ENCODE measurements at regions of chr19 and their contacts with region 1.

Region 1: DNA sequence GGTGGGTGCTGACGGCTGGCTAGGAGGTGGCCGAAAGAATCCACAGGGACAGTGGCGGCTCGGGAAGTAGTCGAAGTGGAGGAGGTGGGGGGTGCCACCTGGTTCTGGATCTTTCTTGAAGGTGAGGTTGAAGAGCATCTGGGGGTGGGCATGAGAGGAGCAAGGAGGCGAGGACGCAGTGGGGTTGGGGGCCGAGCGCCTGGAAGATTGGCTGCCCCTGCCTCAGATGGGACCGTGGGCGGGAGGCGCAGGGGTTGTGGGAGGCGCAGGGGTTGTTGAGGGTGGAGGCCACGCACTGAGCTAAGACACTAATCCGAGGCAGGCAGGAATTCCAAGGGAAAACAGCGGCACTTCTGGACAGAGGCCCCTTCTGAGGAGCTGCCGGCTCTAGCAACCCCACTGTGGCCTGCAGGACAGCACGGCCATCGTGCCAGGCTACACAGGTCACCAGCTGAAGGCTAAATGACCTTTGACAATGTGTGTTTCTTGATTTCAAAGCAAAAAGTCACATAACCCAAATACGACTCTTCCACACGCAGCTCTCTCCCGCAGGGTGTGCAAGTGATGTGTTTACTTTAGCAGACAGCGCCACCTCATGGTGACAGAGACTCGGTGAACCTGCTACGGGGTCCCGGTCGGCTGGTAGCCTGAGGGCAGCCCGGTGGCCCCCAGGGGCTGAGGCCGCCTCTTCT is 44.1 kb upstream of the RANBP3 start:
- DNase-seq: peak; percentile 52 to 85 (median 81)
- ATAC-seq: peak; percentile 94
- H3K4me3 ChIP-seq: no peak overlapping the region
- H3K4me3 Mint-ChIP-seq: no peak overlapping the region
- H3K27ac ChIP-seq: no peak overlapping the region
- H3K27ac Mint-ChIP-seq: no peak overlapping the region
- H3K4me1 ChIP-seq: no peaks in the 10 kb centered on the region
- H3K4me1 Mint-ChIP-seq: peaks cover 3% of the 10 kb centered on the region
- H3K27me3 ChIP-seq: no peaks in the 10 kb centered on the region
- H3K27me3 Mint-ChIP-seq: peaks cover 4% of the 10 kb centered on the region
- CTCF ChIP-seq: peak; percentile 84

Region 2: DNA sequence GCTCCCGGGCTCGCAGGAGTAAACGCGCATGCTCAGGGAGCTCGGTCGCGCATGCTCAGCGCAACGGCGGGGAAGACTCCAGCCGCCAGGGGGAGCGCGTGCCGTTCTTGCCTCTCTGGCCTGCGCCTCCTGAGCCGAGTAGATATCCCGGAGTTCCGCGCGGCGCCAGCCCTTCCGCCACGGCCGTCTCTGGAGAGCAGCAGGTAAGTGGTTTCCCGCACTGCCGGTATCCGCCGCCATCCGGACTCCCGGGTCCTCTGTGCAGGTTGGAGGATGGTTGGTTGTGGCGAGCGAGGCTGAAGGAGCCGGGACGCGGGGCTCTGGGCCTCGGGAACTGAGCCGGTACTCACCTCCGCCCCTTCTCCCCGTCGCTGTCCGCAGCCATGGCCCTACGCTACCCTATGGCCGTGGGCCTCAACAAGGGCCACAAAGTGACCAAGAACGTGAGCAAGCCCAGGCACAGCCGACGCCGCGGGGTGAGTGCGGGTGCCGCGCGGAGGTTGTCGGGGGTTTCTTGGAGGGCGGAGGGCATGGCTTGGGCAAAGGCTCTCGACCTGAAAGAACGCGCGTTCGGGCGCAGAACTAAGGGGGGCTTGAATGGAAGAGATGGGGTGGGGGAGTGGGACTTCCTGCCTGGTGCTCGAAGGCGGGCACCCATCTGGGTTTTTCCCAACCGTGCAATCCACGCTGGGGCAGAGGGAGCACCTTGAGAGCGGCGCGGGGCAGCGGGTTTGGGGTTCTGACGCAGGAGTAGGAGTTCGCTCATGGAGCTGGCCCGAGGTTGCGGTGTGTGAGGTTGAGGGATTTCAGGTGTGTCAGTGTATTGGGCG is 331.7 kb before region 1 on chr19 and contains the start of gene RPL36:
- CTCF ChIA-PET with region 1: no interaction called
- POLR2A ChIA-PET with region 1: no interaction called
- intact Hi-C with region 1: loop called in 1 of 2 experiments (anchors 1 kb)
- DNase-seq: peak; percentile 95 to 100 (median 99)
- ATAC-seq: peak; percentile 63
- H3K4me3 ChIP-seq: peak within 1 kb of the TSS; percentile 84 to 96
- H3K4me3 Mint-ChIP-seq: peak within 1 kb of the TSS; percentile 91
- H3K27ac ChIP-seq: peak within 1 kb of the TSS; percentile 86 to 89
- H3K27ac Mint-ChIP-seq: peak within 1 kb of the TSS; percentile 93
- H3K4me1 ChIP-seq: peaks cover 26% of the 10 kb centered on the region
- H3K4me1 Mint-ChIP-seq: peaks cover 48% of the 10 kb centered on the region
- H3K27me3 ChIP-seq: no peaks in the 10 kb centered on the region
- H3K27me3 Mint-ChIP-seq: no peaks in the 10 kb centered on the region
- CTCF ChIP-seq: peak; percentile 96
- total RNA-seq, gene RPL36: 1,425 to 1,465 TPM

Region 3: GRCh38 chr19:5803752-5804515 is 218.1 kb before region 1 on chr19:
- CTCF ChIA-PET with region 1: interaction called, 36 read pairs
- POLR2A ChIA-PET with region 1: interaction called, 4 read pairs
- intact Hi-C with region 1: loop called in 1 of 2 experiments (anchors 1 kb)
- DNase-seq: peak; percentile 80 to 96 (median 92)
- ATAC-seq: peak; percentile 97
- H3K4me3 ChIP-seq: peak overlapping the region; percentile 41 to 61
- H3K4me3 Mint-ChIP-seq: peak overlapping the region; percentile 75
- H3K27ac ChIP-seq: no peak overlapping the region
- H3K27ac Mint-ChIP-seq: no peak overlapping the region
- H3K4me1 ChIP-seq: peaks cover 34% of the 10 kb centered on the region
- H3K4me1 Mint-ChIP-seq: peaks cover 23% of the 10 kb centered on the region
- H3K27me3 ChIP-seq: peaks cover 0 to 35% of the 10 kb centered on the region in 2 experiments
- H3K27me3 Mint-ChIP-seq: peaks cover 18% of the 10 kb centered on the region
- CTCF ChIP-seq: peak; percentile 93

Region 4: GRCh38 chr19:5927441-5927821 is 94.6 kb before region 1 on chr19:
- CTCF ChIA-PET with region 1: interaction called, 11 read pairs
- POLR2A ChIA-PET with region 1: no interaction called
- intact Hi-C with region 1: no loop called
- DNase-seq: no peak
- ATAC-seq: no peak
- H3K4me3 ChIP-seq: no peak overlapping the region
- H3K4me3 Mint-ChIP-seq: no peak overlapping the region
- H3K27ac ChIP-seq: no peak overlapping the region
- H3K27ac Mint-ChIP-seq: no peak overlapping the region
- H3K4me1 ChIP-seq: no peaks in the 10 kb centered on the region
- H3K4me1 Mint-ChIP-seq: no peaks in the 10 kb centered on the region
- H3K27me3 ChIP-seq: no peaks in the 10 kb centered on the region
- H3K27me3 Mint-ChIP-seq: no peaks in the 10 kb centered on the region
- CTCF ChIP-seq: no peak

Region 5: DNA sequence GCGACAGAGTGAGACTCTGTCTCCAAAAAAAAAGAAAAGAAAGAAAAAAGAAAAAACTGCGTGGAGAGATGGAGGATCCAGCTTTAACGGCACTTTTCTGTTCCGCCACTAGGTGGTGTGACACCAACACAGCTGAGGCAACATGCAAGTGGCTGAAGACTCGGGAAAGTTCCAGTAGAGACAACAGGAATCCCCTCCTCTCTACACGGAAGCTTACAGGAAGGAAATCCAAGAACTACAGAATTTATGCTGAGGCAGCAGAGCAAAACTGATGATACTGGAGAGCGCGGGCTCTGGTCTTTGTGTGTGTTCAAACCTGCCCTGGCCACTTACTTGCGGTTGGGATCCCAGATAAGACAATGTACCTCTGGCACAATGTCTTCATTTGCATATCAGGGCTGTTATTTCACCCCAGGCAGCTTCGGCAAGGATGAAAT is 54.0 kb before region 1 on chr19:
- CTCF ChIA-PET with region 1: interaction called, 32 read pairs
- POLR2A ChIA-PET with region 1: no interaction called
- intact Hi-C with region 1: loop called in 1 of 2 experiments (anchors 1 kb)
- DNase-seq: peak in 8 of 9 experiments; percentile 46 to 81 (median 68)
- ATAC-seq: peak; percentile 81
- H3K4me3 ChIP-seq: no peak overlapping the region
- H3K4me3 Mint-ChIP-seq: peak overlapping the region; percentile 50
- H3K27ac ChIP-seq: no peak overlapping the region
- H3K27ac Mint-ChIP-seq: peak overlapping the region; percentile 83
- H3K4me1 ChIP-seq: peaks cover 89% of the 10 kb centered on the region
- H3K4me1 Mint-ChIP-seq: peaks cover 86% of the 10 kb centered on the region
- H3K27me3 ChIP-seq: no peaks in the 10 kb centered on the region
- H3K27me3 Mint-ChIP-seq: no peaks in the 10 kb centered on the region
- CTCF ChIP-seq: peak; percentile 94

Region 6: GRCh38 chr19:5987077-5987818 is 34.8 kb before region 1 on chr19:
- CTCF ChIA-PET with region 1: interaction called, 22 read pairs
- POLR2A ChIA-PET with region 1: no interaction called
- intact Hi-C with region 1: loop called (anchors 1 kb)
- DNase-seq: peak; percentile 41 to 85 (median 74)
- ATAC-seq: peak; percentile 71
- H3K4me3 ChIP-seq: peak overlapping the region; percentile 36 to 41
- H3K4me3 Mint-ChIP-seq: peak overlapping the region; percentile 79
- H3K27ac ChIP-seq: no peak overlapping the region
- H3K27ac Mint-ChIP-seq: no peak overlapping the region
- H3K4me1 ChIP-seq: peaks cover 5% of the 10 kb centered on the region
- H3K4me1 Mint-ChIP-seq: peaks cover 26% of the 10 kb centered on the region
- H3K27me3 ChIP-seq: no peaks in the 10 kb centered on the region
- H3K27me3 Mint-ChIP-seq: no peaks in the 10 kb centered on the region
- CTCF ChIP-seq: peak; percentile 93

Region 7: DNA sequence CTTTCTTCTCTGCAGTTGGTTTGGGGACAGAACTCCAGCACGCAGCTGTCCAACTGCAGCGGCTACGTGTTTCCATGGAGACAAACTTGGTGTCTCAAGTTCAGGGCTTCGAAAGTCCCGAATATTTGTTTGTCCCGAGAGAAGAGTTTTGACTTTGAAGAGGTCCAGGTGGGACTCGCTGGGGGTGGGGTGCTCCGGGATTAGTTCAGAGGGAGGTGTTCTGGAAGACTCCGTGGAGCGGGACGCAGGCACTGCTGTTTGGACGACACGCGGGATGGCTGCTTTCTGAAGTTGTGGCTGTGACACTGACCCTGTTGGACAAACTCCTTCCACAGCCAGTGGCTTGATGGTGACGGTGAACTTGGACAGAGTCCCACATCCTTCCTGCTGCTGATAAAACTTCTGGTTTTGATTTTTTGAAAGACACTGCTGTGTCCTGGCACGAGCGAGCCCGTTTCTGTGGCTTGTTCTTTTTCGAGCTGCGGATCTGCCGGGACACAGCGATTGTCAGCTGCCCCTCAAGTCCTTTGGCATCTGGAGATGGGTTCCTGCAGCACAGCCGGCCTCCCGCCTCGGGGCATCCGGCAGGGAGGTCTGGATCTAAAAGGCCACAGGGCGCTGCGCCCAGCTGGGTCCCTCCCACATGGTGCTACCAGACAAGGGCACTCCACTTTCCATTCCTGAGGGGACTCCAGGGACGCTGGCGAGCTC is 28.2 kb before region 1 on chr19:
- CTCF ChIA-PET with region 1: interaction called, 22 read pairs
- POLR2A ChIA-PET with region 1: no interaction called
- intact Hi-C with region 1: no loop called
- DNase-seq: no peak
- ATAC-seq: no peak
- H3K4me3 ChIP-seq: no peak overlapping the region
- H3K4me3 Mint-ChIP-seq: no peak overlapping the region
- H3K27ac ChIP-seq: no peak overlapping the region
- H3K27ac Mint-ChIP-seq: no peak overlapping the region
- H3K4me1 ChIP-seq: no peaks in the 10 kb centered on the region
- H3K4me1 Mint-ChIP-seq: peaks cover 5% of the 10 kb centered on the region
- H3K27me3 ChIP-seq: no peaks in the 10 kb centered on the region
- H3K27me3 Mint-ChIP-seq: no peaks in the 10 kb centered on the region
- CTCF ChIP-seq: no peak

Region 8: GRCh38 chr19:6110360-6110977 is 88.4 kb after region 1 on chr19 and contains the start of gene RFX2:
- CTCF ChIA-PET with region 1: no interaction called
- POLR2A ChIA-PET with region 1: no interaction called
- intact Hi-C with region 1: no loop called
- DNase-seq: peak; percentile 98 to 99 (median 99)
- ATAC-seq: peak; percentile 97
- H3K4me3 ChIP-seq: peak within 1 kb of the TSS; percentile 59
- H3K4me3 Mint-ChIP-seq: peak within 1 kb of the TSS; percentile 89
- H3K27ac ChIP-seq: peak within 1 kb of the TSS; percentile 52 to 58
- H3K27ac Mint-ChIP-seq: peak within 1 kb of the TSS; percentile 80
- H3K4me1 ChIP-seq: peaks cover 14% of the 10 kb centered on the region
- H3K4me1 Mint-ChIP-seq: peaks cover 17% of the 10 kb centered on the region
- H3K27me3 ChIP-seq: peaks cover 0 to 13% of the 10 kb centered on the region in 2 experiments
- H3K27me3 Mint-ChIP-seq: peaks cover 3% of the 10 kb centered on the region
- CTCF ChIP-seq: no peak
- total RNA-seq, gene RFX2: 9.0 to 12.4 TPM

Region 9: GRCh38 chr19:6185835-6186834 is 164.1 kb after region 1 on chr19:
- CTCF ChIA-PET with region 1: no interaction called
- POLR2A ChIA-PET with region 1: no interaction called
- intact Hi-C with region 1: no loop called
- DNase-seq: peak in 1 of 9 experiments; percentile 15
- ATAC-seq: no peak
- H3K4me3 ChIP-seq: no peak overlapping the region
- H3K4me3 Mint-ChIP-seq: no peak overlapping the region
- H3K27ac ChIP-seq: no peak overlapping the region
- H3K27ac Mint-ChIP-seq: no peak overlapping the region
- H3K4me1 ChIP-seq: no peaks in the 10 kb centered on the region
- H3K4me1 Mint-ChIP-seq: peaks cover 5% of the 10 kb centered on the region
- H3K27me3 ChIP-seq: peaks cover 0 to under 1% of the 10 kb centered on the region in 2 experiments
- H3K27me3 Mint-ChIP-seq: peaks cover 27% of the 10 kb centered on the region
- CTCF ChIP-seq: no peak